IMR-90 (cell line): ENCODE measurements at regions of chr10 and their contacts with region 1.

Region 1: DNA sequence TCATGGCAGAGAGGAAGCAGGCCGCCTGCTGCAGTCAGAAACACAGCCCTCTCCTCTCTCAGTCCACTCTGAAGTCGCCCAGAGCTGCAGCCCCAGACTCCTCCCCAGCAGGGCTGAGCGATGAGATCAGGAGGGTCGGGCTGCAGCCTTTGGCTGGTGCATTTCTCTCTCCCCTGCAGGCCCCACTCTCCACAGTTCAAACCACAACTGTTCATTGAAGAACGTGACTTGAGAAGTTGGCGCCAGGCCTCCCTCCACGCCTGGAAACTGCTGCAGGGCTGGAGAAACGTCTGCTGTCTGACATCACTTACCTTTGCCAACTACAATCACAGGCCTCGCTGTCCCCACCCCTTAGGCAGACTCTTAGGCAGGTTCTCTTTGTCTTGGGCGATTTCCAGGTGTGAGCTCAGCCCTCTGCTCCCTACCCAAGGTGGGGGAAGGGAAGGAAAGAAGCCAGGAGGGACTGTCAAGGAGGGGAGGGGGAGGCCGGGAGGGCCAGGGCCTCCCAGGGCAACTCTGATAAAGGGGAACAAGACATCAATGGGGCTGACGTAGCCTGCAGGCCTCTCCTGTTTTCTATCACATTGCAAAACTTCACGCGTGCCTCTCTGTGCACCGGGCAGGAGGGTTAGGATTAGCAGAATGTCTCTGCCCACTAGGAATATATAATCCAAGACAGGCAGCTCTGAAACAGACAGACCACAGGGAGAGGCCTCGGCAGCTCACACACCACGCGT is 32.8 kb downstream of the CALML5 start:
- DNase-seq: peak; percentile 82
- ATAC-seq: peak; percentile 92
- H3K4me3 ChIP-seq: no peak overlapping the region
- H3K27ac ChIP-seq: peak overlapping the region; percentile 19; the same call in 1 of the 2 replicates
- H3K4me1 ChIP-seq: peaks cover 16% of the 10 kb centered on the region
- H3K27me3 ChIP-seq: no peaks in the 10 kb centered on the region
- CTCF ChIP-seq: no peak
- POLR2A ChIP-seq: no peak
- RAD21 ChIP-seq: no peak

Region 2: GRCh38 chr10:5524641-5525560 is 58.3 kb after region 1 on chr10 and contains the start of gene CALML3:
- CTCF ChIA-PET with region 1: no interaction called
- POLR2A ChIA-PET with region 1: no interaction called
- dilution Hi-C with region 1: no loop called
- in situ Hi-C with region 1: no loop called
- intact Hi-C with region 1: loop called (anchors 5 kb)
- DNase-seq: no peak
- ATAC-seq: no peak
- H3K4me3 ChIP-seq: no peak within 1 kb of the TSS
- H3K27ac ChIP-seq: no peak within 1 kb of the TSS
- H3K4me1 ChIP-seq: no peaks in the 10 kb centered on the region
- H3K27me3 ChIP-seq: peaks cover 5% of the 10 kb centered on the region
- CTCF ChIP-seq: no peak
- POLR2A ChIP-seq: no peak
- RAD21 ChIP-seq: no peak
- total RNA-seq, gene CALML3: not detected in 2 replicates

Region 3: DNA sequence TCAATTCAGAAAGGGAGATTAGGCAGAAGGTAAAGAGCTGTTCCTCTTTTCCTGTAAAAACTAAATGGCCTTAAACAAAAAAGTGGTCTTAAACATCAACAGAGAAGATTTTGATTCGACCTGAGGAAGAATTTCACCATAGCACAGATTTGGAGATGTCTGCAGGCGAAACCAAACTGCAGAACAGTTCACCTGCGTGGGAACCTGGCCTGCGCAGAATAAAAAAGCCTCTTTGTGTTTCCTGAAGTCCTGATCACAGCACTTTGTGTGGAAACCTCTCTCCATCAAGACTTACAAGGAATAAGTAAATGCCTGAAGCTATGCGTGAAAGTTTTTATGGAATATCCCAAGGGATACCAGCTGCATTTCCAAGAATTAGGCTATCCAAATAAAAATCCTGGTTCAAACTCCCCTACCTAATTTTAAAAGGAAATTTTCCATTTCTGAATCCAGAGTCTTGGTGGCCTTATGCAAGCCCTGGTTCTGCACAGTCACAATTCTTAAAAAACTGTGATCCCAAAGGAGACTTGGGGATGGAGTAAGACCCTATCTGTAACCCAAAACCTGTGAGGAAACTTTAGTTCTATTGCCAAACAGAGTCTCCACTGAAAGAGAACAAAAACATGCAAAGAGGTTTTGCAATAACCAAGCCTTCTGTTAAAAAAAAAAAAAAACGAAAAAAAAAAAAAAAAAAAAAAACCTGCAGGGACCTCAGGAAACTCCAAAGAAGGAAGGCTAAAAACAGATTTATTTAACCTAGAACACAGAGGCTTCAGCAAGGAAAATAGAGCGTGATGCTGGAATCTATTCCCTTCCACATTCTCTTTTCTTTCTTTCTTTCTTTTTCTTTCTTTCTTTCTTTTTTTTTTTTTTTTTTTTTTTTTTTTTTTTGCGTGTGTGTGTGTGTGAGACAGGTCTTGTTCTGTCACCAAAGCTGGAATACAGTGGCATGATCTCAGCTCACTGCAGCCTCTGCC is 68.6 kb after region 1 on chr10:
- CTCF ChIA-PET with region 1: no interaction called
- POLR2A ChIA-PET with region 1: no interaction called
- dilution Hi-C with region 1: no loop called
- in situ Hi-C with region 1: no loop called
- intact Hi-C with region 1: loop called (anchors 5 kb)
- DNase-seq: peak; percentile 80
- ATAC-seq: peak; percentile 60
- H3K4me3 ChIP-seq: no peak overlapping the region
- H3K27ac ChIP-seq: peak overlapping the region; percentile 6; the same call in 1 of the 2 replicates
- H3K4me1 ChIP-seq: peaks cover 10% of the 10 kb centered on the region
- H3K27me3 ChIP-seq: no peaks in the 10 kb centered on the region
- CTCF ChIP-seq: no peak
- POLR2A ChIP-seq: no peak
- RAD21 ChIP-seq: no peak